ENCODE measurements at regions of chr1 and their contacts with region 1.

Region 1: DNA sequence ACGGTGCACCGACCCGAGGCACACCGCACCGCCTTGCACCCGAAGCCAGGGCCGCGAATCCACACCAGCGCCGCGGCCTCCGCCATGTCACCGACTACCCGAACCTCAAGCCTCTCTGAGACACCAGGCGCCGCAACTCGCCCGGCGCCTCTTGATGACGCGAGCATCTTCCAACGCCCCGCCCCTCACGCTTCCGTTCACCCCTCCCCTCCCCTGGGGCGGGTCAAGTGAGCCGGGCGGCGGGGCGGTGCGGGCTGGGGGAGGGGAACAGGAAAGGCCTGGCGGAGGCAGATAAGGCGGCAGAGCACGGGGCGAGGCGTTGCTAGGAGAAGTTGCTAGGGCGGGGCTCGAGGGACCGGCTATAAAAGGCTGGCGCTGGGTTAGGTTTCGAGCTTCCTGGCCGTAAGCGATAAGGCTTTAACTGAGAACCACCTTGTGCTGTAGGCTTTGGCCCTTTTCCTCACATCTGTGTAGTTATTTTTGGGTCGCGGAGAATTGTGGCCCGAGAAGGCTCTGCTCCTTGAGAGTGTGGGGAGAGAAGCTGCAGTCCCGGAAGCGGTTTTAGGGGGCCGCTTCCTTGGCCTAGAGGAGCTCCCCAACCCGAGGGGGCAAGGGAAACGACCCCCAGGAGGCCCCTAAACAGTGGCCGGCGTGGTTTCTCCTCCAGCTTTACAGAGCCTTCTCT is at the start of gene SDE2:
- DNase-seq: peak; percentile 88 to 99
- ATAC-seq: peak; percentile 94 to 96
- H3K4me3 ChIP-seq: peak within 1 kb of the TSS; percentile 66
- H3K27ac ChIP-seq: peak within 1 kb of the TSS; percentile 77 to 94
- H3K4me1 ChIP-seq: peaks cover 35% of the 10 kb centered on the region; the same call in 2 of the 3 replicates
- CTCF ChIP-seq: no peak
- EP300 ChIP-seq: no peak
- POLR2A ChIP-seq: peak; percentile 82
- RAD21 ChIP-seq: no peak
- polyA plus RNA-seq, gene SDE2: 15.6 and 24.8 TPM in 2 replicates

Region 2: GRCh38 chr1:225987491-225988316 is 11.7 kb before region 1 on chr1:
- CTCF ChIA-PET with region 1: interaction called, 29 read pairs
- POLR2A ChIA-PET with region 1: interaction called, 13 read pairs
- DNase-seq: peak; percentile 42 to 58
- ATAC-seq: peak; percentile 56 to 72; a peak in 4 of 6 replicates
- H3K4me3 ChIP-seq: no peak overlapping the region
- H3K27ac ChIP-seq: no peak overlapping the region
- H3K4me1 ChIP-seq: no peaks in the 10 kb centered on the region
- CTCF ChIP-seq: peak; percentile 77
- EP300 ChIP-seq: no peak
- POLR2A ChIP-seq: no peak
- RAD21 ChIP-seq: peak; percentile 46 to 50; a peak in 4 of 5 replicates

Region 3: GRCh38 chr1:226009650-226010044 is 10.3 kb after region 1 on chr1:
- CTCF ChIA-PET with region 1: interaction called, 6 read pairs
- POLR2A ChIA-PET with region 1: interaction called, 17 read pairs
- DNase-seq: no peak
- ATAC-seq: no peak
- H3K4me3 ChIP-seq: no peak overlapping the region
- H3K27ac ChIP-seq: no peak overlapping the region
- H3K4me1 ChIP-seq: no peaks in the 10 kb centered on the region
- CTCF ChIP-seq: no peak
- EP300 ChIP-seq: no peak
- POLR2A ChIP-seq: no peak
- RAD21 ChIP-seq: no peak

Region 4: DNA sequence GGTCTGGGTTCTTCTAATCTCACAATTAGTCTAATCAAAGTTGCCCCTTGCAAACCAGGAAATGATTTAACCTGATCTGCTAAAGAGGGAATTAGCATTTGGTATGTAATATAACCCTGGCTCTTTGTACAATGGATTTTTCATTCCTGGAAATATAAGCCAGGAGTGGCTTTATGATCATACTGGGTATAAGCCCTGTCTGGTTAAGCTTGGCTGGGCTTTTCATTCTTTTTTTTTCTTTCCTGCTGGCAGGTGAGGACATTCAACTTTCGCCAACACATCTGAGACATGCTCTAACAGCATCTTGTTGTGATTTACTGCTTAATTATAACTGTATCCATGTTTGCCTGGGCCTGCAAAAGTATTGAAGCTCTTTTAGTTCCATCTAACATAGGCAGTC is 20.2 kb after region 1 on chr1:
- CTCF ChIA-PET with region 1: interaction called, 6 read pairs
- POLR2A ChIA-PET with region 1: interaction called, 14 read pairs
- DNase-seq: no peak
- ATAC-seq: no peak
- H3K4me3 ChIP-seq: no peak overlapping the region
- H3K27ac ChIP-seq: no peak overlapping the region
- H3K4me1 ChIP-seq: no peaks in the 10 kb centered on the region
- CTCF ChIP-seq: no peak
- EP300 ChIP-seq: no peak
- POLR2A ChIP-seq: no peak
- RAD21 ChIP-seq: no peak

Region 5: DNA sequence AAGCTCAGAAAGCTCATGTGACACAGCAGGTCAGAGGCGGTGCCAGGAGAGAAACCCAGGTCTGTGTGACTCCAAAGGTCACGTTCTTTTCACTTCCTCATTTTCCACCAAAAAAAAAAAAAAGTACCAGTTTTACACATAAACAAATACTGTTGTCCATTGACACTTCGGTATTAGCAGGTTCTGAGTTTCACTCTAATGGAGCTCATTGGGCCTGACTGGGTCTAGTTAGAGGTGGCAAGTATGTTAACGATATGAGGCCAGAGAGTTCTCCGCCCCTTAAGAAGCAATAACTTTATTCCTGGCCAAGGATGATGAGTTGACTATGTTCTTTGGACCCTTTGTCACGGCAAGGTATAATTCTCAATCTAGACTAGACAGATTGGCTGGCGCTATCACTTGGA is 29.7 kb after region 1 on chr1:
- CTCF ChIA-PET with region 1: no interaction called
- POLR2A ChIA-PET with region 1: interaction called, 11 read pairs
- DNase-seq: no peak
- ATAC-seq: no peak
- H3K4me3 ChIP-seq: no peak overlapping the region
- H3K27ac ChIP-seq: no peak overlapping the region
- H3K4me1 ChIP-seq: no peaks in the 10 kb centered on the region
- CTCF ChIP-seq: no peak
- EP300 ChIP-seq: no peak
- POLR2A ChIP-seq: no peak
- RAD21 ChIP-seq: no peak

Region 6: DNA sequence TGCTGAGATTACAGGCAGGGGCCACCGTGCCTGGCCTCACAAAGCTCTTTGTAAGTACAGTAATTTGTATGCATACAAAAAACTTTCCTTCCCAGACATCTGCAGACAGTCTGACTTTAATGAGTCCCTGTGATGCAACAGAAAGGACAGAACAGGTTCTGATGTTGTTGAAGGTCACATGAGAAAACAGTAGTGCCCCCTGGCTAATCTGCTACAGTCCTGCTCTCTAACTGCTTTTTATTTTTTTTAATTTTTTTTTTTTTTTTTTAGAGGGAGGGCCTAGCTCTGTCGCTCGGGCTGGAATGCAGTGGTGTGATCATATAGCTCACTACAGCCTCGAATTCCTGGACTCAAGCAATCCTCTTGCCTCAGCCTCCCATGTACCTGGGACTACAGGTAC is 150.4 kb after region 1 on chr1:
- CTCF ChIA-PET with region 1: no interaction called
- POLR2A ChIA-PET with region 1: no interaction called
- DNase-seq: peak in 1 of 2 experiments; percentile 37
- ATAC-seq: peak in 1 of 2 experiments; percentile 60; a peak in 3 of 6 replicates
- H3K4me3 ChIP-seq: no peak overlapping the region
- H3K27ac ChIP-seq: no peak overlapping the region
- H3K4me1 ChIP-seq: no peaks in the 10 kb centered on the region
- CTCF ChIP-seq: no peak
- EP300 ChIP-seq: no peak
- POLR2A ChIP-seq: no peak
- RAD21 ChIP-seq: no peak